Esophagus muscularis mucosa (tissue), 4 donors: ENCODE measurements at regions of chr22 and their contacts with region 1.

Region 1: DNA sequence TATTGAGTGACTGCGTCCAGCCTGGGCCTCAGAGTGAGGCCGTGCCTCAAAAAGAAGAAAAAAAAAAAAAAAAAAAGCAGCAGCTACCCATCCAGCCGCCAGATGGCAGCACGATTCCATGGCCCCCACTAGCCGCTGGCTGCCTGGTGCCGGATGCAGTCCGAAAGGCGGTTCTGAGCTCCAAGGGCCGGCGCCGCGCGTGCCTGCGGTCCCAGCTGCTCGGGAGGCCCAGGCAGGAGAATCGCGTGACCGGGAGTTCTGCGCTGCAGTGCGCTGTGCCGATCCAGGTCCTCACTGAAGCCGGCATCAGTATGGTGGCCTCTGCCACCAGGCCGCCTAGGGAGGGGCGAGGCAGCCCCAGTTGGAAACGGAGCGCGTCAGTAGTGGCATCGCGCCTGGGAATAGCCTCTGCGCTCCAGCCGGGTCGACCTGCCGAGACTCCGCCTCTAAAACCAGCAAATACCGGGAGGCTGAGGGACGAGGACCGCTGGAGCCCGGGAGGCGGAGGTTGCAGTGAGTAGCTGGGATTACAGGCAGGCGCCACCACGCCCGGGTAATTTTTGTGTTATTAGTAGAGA is 19.3 kb downstream of the SCARF2 start:
- DNase-seq: no peak
- H3K4me3 ChIP-seq: peak overlapping the region; percentile 42 to 55 (median 48)
- H3K27ac ChIP-seq: peak overlapping the region; percentile 30 to 71 (median 68)
- H3K4me1 ChIP-seq: peaks cover 0 to 19% (median 15%) of the 10 kb centered on the region in 4 donors
- H3K27me3 ChIP-seq: no peaks in the 10 kb centered on the region
- CTCF ChIP-seq: peak; percentile 83 to 85 (median 84)
- EP300 ChIP-seq: no peak
- POLR2A ChIP-seq: no peak

Region 2: DNA sequence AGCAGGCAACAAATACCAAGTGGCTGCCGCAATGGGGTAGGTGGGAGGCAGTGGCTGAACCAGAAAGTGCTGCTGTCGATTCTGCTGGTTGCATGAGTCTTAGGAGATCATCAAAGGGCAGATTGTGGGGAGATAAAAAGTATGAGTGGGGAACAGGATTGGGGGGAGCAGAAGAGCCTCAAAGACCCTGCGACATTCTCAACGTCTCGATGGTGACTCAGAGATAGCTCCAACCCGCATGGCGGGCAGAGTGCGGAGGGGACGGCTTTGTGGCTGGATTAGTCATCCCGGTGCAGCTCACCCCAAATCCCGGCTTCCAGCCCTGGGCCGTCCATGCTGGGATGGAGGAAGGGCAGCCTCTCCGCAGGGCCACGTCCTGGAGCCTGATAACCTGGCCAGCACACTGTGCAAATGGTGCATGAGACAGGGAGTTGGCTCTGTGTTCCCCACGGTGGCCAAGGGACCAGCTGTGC is 138.6 kb before region 1 on chr22:
- intact Hi-C with region 1: no loop called
- DNase-seq: no peak
- H3K4me3 ChIP-seq: no peak overlapping the region
- H3K27ac ChIP-seq: no peak overlapping the region
- H3K4me1 ChIP-seq: no peaks in the 10 kb centered on the region
- H3K27me3 ChIP-seq: no peaks in the 10 kb centered on the region
- CTCF ChIP-seq: no peak
- EP300 ChIP-seq: no peak
- POLR2A ChIP-seq: no peak

Region 3: DNA sequence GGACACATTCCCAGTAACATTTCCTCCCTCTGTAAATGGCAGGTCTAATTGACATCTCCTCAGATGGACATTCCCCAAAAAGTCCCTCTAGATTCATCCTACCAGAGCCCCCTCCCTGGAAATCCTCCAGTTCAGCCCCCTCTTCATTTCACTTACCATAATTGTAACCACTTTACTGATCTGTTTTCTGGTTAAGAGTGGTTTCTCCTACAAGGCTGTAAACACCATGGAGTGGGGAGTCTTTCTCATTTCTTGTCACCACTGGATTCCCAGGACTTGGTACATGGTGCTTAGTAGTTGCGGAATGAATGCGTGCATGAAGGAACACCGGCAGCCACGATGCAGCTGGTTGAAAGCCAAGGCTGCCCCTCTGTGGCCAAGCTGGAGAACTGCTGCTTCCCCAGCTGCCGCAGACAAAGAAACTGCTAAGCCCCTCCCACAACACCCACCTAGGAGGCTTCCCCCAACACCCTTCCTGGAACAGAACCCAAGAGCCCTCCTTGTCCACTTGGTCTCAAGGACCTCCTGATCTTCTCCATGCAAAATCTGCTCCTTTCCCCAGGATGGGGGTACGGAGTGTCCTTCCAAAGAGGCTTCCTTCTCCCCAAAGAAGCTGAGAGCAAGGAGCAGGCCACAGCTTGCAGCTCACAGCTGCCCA is 37.9 kb after region 1 on chr22:
- intact Hi-C with region 1: loop called (anchors 2 kb)
- DNase-seq: no peak
- H3K4me3 ChIP-seq: no peak overlapping the region
- H3K27ac ChIP-seq: no peak overlapping the region
- H3K4me1 ChIP-seq: peaks cover 0 to 12% (median 4%) of the 10 kb centered on the region in 4 donors
- H3K27me3 ChIP-seq: no peaks in the 10 kb centered on the region
- CTCF ChIP-seq: peak; percentile 87 to 93 (median 88)
- EP300 ChIP-seq: no peak
- POLR2A ChIP-seq: no peak

Region 4: GRCh38 chr22:20507253-20508066 is 89.2 kb after region 1 on chr22 and contains the start of gene MED15:
- intact Hi-C with region 1: no loop called
- DNase-seq: peak; percentile 97
- H3K4me3 ChIP-seq: peak within 1 kb of the TSS; percentile 73 to 98 (median 86)
- H3K27ac ChIP-seq: peak within 1 kb of the TSS; percentile 95 to 99 (median 96)
- H3K4me1 ChIP-seq: peaks cover 42 to 51% (median 51%) of the 10 kb centered on the region in 4 donors
- H3K27me3 ChIP-seq: no peaks in the 10 kb centered on the region
- CTCF ChIP-seq: peak in 1 of 3 experiments; percentile 32
- EP300 ChIP-seq: no peak
- POLR2A ChIP-seq: peak; percentile 93
- total RNA-seq, gene MED15: 34.0 to 54.1 (median 38.9) TPM